ENCODE measurements at regions of chr12 and their contacts with region 1.

Region 1: DNA sequence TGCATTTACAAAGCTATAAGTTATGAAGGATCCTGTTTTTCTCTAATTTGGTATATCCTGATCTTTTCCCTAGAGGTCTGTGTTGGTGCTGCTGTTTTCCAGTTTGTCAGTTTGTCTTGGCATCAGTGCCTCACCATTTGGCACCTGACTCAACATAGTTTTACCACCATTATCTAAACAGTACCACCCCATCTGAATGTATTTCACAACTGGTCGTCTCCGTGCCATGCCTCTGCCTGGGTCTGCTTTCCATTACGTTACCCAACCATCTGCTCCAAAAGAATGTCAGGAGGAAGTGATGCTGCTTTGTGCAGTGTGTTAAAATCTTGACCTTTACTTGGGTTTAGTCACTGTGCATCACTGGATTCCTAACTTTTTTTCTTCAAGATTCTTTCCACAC is 129.3 kb upstream of the RASSF8 start:
- DNase-seq: no peak
- H3K4me3 ChIP-seq: no peak overlapping the region
- H3K27ac ChIP-seq: peak overlapping the region; percentile 32 to 71 (median 62)
- H3K4me1 ChIP-seq: peaks cover 2 to 41% (median 36%) of the 10 kb centered on the region in 4 donors
- H3K27me3 ChIP-seq: no peaks in the 10 kb centered on the region
- CTCF ChIP-seq: no peak
- EP300 ChIP-seq: peak; percentile 36
- POLR2A ChIP-seq: no peak

Region 2: GRCh38 chr12:25583545-25583944 is 245.6 kb before region 1 on chr12:
- intact Hi-C with region 1: loop called (anchors 10 kb)
- DNase-seq: no peak
- H3K4me3 ChIP-seq: no peak overlapping the region
- H3K27ac ChIP-seq: peak overlapping the region in 1 of 4 donors; percentile 9
- H3K4me1 ChIP-seq: peaks cover 4 to 29% (median 19%) of the 10 kb centered on the region in 4 donors
- H3K27me3 ChIP-seq: no peaks in the 10 kb centered on the region
- CTCF ChIP-seq: peak in 1 of 3 experiments; percentile 9
- EP300 ChIP-seq: no peak
- POLR2A ChIP-seq: no peak

Region 3: DNA sequence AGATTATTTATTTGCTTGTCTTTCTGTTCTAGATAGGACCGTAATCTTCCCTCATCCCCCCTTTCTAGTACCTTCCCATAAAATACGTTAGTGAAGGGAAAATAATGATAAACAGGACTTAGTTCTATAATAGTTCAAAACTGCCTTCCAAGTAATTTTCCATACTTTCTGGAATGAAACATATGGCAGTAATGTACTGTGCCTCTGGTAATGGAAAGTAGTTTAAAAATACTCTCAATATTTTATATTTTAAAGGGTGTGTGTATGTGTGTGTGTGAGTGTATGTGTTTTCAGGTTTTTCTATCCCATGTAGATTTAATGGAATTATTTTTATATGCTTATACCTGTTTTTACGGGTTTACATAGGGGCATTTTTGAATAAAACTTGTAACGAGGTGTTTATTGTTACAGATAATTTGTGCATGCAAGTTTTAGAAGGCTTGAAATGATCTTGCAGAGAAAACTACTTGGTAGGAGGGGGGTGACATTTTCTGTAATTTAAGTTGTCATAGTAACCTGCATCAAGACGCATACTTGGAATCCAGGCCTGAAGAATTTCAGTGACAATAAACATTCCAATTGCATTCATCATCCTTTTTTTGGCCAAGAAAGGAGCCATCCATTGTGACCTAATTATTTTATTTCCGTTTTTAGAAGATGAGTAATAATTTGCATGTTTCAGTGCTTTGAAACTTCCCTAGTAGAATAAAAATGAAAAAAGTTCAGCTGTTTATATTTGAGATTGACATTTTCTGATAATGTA is 168.2 kb after region 1 on chr12:
- intact Hi-C with region 1: no loop called
- DNase-seq: no peak
- H3K4me3 ChIP-seq: no peak overlapping the region
- H3K27ac ChIP-seq: peak overlapping the region; percentile 51 to 68 (median 64)
- H3K4me1 ChIP-seq: peaks cover 37 to 74% (median 68%) of the 10 kb centered on the region in 4 donors
- H3K27me3 ChIP-seq: no peaks in the 10 kb centered on the region
- CTCF ChIP-seq: no peak
- EP300 ChIP-seq: no peak
- POLR2A ChIP-seq: no peak